ENCODE measurements at regions of chr17 and their contacts with region 1.

Region 1: GRCh38 chr17:38709864-38710603 is 5.0 kb downstream of the MLLT6 start:
- DNase-seq: no peak
- H3K4me3 ChIP-seq: no peak overlapping the region
- H3K27me3 ChIP-seq: no peaks in the 10 kb centered on the region
- CTCF ChIP-seq: no peak

Region 2: GRCh38 chr17:38636054-38636453 is 74.0 kb before region 1 on chr17:
- CTCF ChIA-PET with region 1: no interaction called
- POLR2A ChIA-PET with region 1: no interaction called
- DNase-seq: no peak
- H3K4me3 ChIP-seq: no peak overlapping the region
- H3K27me3 ChIP-seq: no peaks in the 10 kb centered on the region
- CTCF ChIP-seq: no peak

Region 3: GRCh38 chr17:38735161-38735997 is 25.3 kb after region 1 on chr17:
- CTCF ChIA-PET with region 1: interaction called, 10 read pairs
- POLR2A ChIA-PET with region 1: no interaction called
- DNase-seq: no peak
- H3K4me3 ChIP-seq: no peak overlapping the region
- H3K27me3 ChIP-seq: no peaks in the 10 kb centered on the region
- CTCF ChIP-seq: peak; percentile 93

Region 4: DNA sequence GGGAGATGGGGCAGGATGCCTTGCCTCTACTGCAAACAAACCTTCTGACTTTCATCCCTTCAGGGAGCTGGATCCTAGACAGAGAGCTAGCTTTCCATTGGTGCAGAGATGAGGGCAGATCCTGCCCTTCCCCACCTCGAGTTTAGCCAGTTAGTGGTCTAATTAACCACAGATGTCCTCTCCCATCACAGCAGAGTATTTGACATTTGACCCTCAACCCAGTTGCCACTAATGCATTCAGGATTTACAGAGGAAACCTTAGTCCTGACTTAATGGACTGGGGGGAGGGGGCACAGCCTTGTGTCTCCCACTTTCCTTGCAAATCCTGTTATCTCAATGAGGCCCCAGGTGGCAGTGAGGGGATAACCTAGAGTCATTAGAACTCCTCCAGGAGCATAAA is 79.2 kb after region 1 on chr17:
- CTCF ChIA-PET with region 1: no interaction called
- POLR2A ChIA-PET with region 1: no interaction called
- DNase-seq: no peak
- H3K4me3 ChIP-seq: no peak overlapping the region
- H3K27me3 ChIP-seq: no peaks in the 10 kb centered on the region
- CTCF ChIP-seq: no peak

Region 5: GRCh38 chr17:38809828-38810227 is 99.8 kb after region 1 on chr17:
- CTCF ChIA-PET with region 1: no interaction called
- POLR2A ChIA-PET with region 1: no interaction called
- DNase-seq: no peak
- H3K4me3 ChIP-seq: no peak overlapping the region
- H3K27me3 ChIP-seq: no peaks in the 10 kb centered on the region
- CTCF ChIP-seq: no peak